Posterior cingulate gyrus (tissue), 11 donors: ENCODE measurements at regions of chr4 and their contacts with region 1.

Region 1: DNA sequence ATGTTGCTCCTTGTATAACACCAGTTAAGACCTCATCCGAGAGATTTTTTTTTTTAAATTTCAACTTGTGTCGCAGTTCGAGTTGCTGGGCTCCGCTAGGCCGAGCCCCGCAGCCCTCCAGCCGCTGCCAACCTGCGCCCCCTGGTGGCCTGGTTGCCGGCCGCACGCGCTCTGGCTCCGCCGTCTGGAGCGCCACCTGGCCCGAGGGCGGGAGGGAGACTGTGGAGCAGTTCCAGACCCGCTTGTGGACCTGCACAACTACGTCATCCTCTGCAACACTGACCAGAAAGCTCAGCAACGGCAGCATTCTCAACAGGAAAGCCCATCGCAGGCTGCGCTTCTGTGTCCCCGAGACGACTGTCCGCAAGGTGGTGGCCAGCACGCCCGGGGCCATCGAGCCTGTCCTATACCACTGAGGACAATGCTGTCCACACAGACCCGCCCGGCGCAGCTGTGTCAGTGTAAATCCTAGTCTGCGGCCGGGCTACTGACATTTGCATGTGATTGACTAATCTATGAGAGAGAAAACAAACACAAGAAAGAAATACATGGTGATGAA is 39.1 kb downstream of the ARL9 start:
- DNase-seq: peak; percentile 80 to 98 (median 90)

Region 2: GRCh38 chr4:56467284-56468096 is 77.2 kb before region 1 on chr4 and contains the start of gene SRP72:
- intact Hi-C with region 1: loop called (anchors 2 kb)
- DNase-seq: peak; percentile 83 to 98 (median 90)